HCT116 (cell line): ENCODE measurements at regions of chr13 and their contacts with region 1.

Region 1: DNA sequence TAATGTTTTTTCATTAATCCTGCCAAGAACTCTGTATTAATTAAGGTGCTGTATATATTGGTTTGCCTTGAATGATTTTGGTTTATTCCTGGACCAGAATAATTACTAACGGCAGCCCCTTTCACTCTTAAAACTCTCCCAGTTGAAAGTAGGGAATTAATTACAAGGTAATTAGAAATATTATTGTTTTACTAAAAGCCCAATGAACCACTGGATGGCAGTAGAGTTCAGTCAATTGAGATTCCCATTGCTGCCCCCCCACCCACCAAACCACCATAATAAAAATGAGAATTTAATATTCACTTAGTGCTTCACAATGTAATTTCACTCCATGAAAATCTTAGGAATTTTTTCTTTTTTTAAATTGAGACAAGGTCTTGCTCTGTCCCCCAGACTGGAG is 13.7 kb downstream of the WBP4 start:
- DNase-seq: no peak
- ATAC-seq: peak; percentile 52
- H3K4me3 ChIP-seq: no peak overlapping the region
- H3K27ac ChIP-seq: no peak overlapping the region
- H3K4me1 ChIP-seq: no peaks in the 10 kb centered on the region
- H3K27me3 ChIP-seq: no peaks in the 10 kb centered on the region
- CTCF ChIP-seq: peak; percentile 49 to 60 (median 49); a peak in 5 of 6 replicates
- POLR2A ChIP-seq: no peak
- RAD21 ChIP-seq: peak; percentile 70

Region 2: DNA sequence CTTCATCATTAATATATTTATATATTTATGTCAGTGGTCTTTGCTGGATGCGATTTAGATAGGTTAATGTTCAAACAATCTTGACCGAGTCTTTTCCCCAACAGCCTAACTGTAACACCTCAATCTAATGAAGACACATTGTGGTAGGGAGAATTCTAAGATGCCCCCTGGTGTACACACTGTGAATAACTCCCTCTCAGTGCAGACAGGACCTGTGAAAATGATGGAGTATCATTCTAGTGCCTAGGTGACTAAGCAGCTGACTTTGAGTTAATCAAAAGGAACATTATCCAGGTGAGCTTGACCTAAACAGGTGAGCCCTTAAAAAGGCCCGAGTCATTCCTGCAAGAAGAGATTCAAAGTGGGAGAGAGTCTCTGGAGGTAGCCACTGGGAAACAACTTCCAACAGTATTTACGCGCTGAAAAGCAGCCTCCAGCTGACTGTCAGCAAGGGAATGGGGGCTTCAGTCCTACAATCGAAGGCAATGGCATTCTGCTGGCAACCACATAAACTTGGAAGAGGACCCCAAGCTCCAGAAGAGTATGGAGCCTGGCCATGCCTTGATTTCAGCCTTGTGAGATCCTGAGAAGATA is 147.3 kb after region 1 on chr13:
- CTCF ChIA-PET with region 1: interaction called, 5 read pairs
- POLR2A ChIA-PET with region 1: no interaction called
- RAD21 ChIA-PET with region 1: no interaction called
- intact Hi-C with region 1: loop called (anchors 1 kb)
- DNase-seq: peak; percentile 50
- ATAC-seq: peak; percentile 96
- H3K4me3 ChIP-seq: no peak overlapping the region
- H3K27ac ChIP-seq: no peak overlapping the region
- H3K4me1 ChIP-seq: peaks cover 2 to 11% of the 10 kb centered on the region in 2 experiments; a peak in 3 of 4 replicates
- H3K27me3 ChIP-seq: no peaks in the 10 kb centered on the region
- CTCF ChIP-seq: peak; percentile 60 to 79 (median 77); a peak in 5 of 6 replicates
- POLR2A ChIP-seq: no peak
- RAD21 ChIP-seq: peak; percentile 61

Region 3: DNA sequence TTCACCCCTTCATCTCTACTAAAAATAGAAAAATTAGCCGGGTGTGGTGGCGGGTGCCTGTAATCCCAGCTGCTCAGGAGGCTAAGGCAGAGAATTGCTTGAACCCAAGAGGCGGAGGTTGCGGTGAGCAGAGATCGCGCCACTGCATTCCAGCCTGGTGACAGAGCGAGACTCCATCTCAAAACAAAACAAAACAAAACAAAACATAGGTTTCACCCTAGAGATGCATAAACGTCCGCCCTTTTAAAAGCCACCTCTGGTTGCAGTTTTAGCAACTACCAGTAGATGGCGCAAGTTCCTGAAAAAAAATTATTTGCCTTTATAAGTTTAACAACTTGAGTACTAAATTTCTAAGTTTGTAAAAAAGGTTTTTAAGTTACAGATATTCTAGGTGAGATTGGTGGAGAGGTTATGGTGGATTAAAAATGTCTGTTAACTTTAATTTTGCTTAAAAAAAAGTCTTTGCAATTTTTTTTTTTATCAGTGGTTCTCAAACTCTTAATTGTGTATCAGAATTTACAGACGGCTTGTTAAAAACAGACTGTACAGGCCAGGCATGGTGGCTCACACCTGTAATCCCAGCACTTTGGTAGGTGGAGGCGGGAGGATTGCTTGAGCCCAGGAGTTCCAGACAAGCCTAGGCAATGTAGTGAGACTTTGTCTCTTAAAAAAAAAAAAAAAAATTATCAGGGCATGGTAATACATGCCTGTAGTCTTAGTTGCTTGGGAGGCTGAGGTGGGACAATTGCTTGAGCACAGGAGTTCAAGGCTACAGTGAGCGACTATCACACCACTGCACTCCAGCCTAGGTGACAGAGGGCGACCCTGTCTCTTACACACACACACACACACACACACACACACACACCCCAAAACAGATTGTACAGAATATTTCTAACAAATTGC is 278.2 kb after region 1 on chr13:
- CTCF ChIA-PET with region 1: no interaction called
- POLR2A ChIA-PET with region 1: no interaction called
- RAD21 ChIA-PET with region 1: no interaction called
- intact Hi-C with region 1: no loop called
- DNase-seq: peak; percentile 62
- ATAC-seq: peak; percentile 96
- H3K4me3 ChIP-seq: no peak overlapping the region
- H3K27ac ChIP-seq: no peak overlapping the region; the same call in 1 of the 2 replicates
- H3K4me1 ChIP-seq: peaks cover 10 to 21% of the 10 kb centered on the region in 2 experiments
- H3K27me3 ChIP-seq: no peaks in the 10 kb centered on the region
- CTCF ChIP-seq: peak; percentile 48 to 86 (median 75); a peak in 5 of 6 replicates
- POLR2A ChIP-seq: no peak
- RAD21 ChIP-seq: peak; percentile 44